ENCODE measurements at regions of chr10 and their contacts with region 1.

Region 1: GRCh38 chr10:91797874-91798648 is at the start of gene TNKS2:
- DNase-seq: peak; percentile 93
- H3K4me3 Mint-ChIP-seq: peak within 1 kb of the TSS; percentile 95
- H3K27ac Mint-ChIP-seq: peak within 1 kb of the TSS; percentile 95
- H3K4me1 Mint-ChIP-seq: peaks cover 50% of the 10 kb centered on the region
- H3K27me3 Mint-ChIP-seq: no peaks in the 10 kb centered on the region
- total RNA-seq, gene TNKS2: 39.1 to 39.4 TPM

Region 2: DNA sequence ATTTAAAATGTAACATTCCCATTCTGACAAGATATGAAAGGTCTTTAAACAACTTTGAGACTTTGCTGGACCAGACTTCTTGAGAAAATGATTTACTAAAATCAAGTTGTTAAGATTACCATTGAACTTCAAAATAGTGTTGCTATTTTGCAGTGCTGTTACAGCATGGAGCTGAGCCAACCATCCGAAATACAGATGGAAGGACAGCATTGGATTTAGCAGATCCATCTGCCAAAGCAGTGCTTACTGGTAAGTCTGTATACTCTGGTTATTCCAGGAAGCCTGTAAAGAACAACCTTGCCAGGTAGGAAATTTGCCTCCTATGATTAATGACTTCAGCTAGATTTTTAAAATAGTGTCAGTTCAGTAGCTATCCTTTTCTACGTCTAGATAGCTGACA is 18.9 kb after region 1 on chr10:
- CTCF ChIA-PET with region 1: interaction called, 3 read pairs
- POLR2A ChIA-PET with region 1: interaction called, 19 read pairs
- DNase-seq: no peak
- H3K4me3 Mint-ChIP-seq: no peak overlapping the region
- H3K27ac Mint-ChIP-seq: no peak overlapping the region
- H3K4me1 Mint-ChIP-seq: no peaks in the 10 kb centered on the region
- H3K27me3 Mint-ChIP-seq: no peaks in the 10 kb centered on the region

Region 3: DNA sequence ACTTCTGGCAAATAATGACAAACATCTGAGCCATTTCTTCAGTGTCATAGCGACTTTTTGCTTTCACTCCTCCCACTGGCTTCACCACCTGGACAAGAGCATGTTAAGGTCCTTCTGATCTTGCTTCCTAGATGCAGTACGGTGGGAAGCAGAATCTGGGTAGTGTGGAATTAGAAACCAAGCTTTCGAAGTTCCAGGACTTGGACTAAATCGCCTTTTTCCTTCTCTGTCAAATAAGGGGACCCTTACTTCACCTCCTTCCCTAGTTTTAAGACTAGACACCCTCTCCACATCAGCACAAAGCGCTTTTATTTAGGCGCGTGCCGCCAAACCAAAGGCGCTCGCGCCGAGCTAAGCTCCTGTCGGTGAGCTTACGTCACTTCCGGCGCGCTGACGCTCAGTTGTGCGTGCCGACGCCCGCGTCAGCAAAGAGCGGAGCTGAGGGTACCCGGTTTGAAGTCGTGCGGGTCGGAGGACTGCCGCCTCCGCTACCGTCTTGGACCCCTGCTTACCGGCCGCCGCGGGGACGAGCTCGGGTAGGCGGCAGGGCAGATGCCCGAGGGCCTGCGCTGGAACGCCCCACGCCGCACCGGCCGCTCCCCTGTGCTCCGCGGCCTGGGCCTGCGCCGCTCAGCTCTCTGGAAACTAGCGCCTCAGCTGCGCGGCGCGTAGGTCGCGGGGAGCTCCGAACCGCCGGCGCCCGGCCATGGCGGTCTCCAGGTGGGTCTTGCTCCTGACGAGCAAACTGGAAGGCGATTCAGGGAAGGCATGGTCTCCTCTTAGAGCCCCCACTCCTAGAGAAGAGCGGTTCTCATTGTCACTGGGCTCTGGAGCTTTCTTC is 125.5 kb after region 1 on chr10 and contains the start of gene BTAF1:
- CTCF ChIA-PET with region 1: interaction called, 3 read pairs
- POLR2A ChIA-PET with region 1: interaction called, 36 read pairs
- DNase-seq: peak; percentile 92
- H3K4me3 Mint-ChIP-seq: peak within 1 kb of the TSS; percentile 94
- H3K27ac Mint-ChIP-seq: peak within 1 kb of the TSS; percentile 96
- H3K4me1 Mint-ChIP-seq: peaks cover 45% of the 10 kb centered on the region
- H3K27me3 Mint-ChIP-seq: peaks cover 2% of the 10 kb centered on the region
- total RNA-seq, gene BTAF1: 51.3 to 54.9 TPM